ENCODE measurements at regions of chr1 and their contacts with region 1.

Region 1: DNA sequence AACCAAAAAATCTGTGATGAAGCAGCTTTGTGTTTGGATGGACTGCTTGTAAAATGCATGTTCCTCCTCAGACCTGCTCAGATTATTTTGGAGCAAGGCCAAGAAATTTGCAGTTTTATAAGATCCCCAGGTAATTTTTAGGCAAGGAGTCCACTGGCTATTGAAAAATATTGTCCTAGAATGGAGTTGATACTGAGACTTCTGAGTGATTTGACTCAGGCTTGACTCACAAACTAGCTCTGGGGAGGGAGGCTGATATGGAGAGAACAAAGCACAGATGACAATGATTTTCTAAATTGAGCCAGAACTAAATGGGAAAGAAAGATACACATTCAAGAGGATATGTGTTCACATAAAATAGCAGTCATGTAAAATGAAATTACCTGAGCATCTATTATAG is 36.7 kb downstream of the AGL start:
- DNase-seq: no peak
- ATAC-seq: no peak
- H3K4me3 ChIP-seq: no peak overlapping the region
- H3K4me3 Mint-ChIP-seq: no peak overlapping the region
- H3K27ac ChIP-seq: no peak overlapping the region
- H3K27ac Mint-ChIP-seq: no peak overlapping the region
- H3K4me1 ChIP-seq: no peaks in the 10 kb centered on the region
- H3K4me1 Mint-ChIP-seq: no peaks in the 10 kb centered on the region
- H3K27me3 ChIP-seq: no peaks in the 10 kb centered on the region
- H3K27me3 Mint-ChIP-seq: no peaks in the 10 kb centered on the region
- CTCF ChIP-seq: no peak

Region 2: DNA sequence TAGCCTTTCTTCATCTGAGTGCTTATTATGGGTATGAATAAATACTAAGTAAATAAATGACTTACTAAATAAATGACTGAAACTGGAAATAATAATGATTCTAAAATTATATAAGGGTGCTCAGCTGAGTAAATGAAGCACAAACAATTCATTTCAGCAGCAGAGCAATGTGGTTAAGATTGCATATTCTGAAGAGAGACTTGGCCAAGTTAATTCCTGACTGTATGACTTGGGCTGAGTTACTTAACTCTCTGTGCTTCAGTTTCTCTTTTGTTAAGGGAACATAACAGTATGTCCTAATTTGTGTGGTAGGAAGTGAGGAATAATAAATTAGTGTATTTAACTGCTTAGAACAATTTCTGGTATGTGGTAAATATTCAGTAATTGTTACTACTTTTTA is 17.5 kb before region 1 on chr1:
- CTCF ChIA-PET with region 1: no interaction called
- POLR2A ChIA-PET with region 1: interaction called, 3 read pairs
- intact Hi-C with region 1: loop called in 1 of 2 experiments (anchors 2 kb)
- DNase-seq: no peak
- ATAC-seq: no peak
- H3K4me3 ChIP-seq: no peak overlapping the region
- H3K4me3 Mint-ChIP-seq: no peak overlapping the region
- H3K27ac ChIP-seq: no peak overlapping the region
- H3K27ac Mint-ChIP-seq: no peak overlapping the region
- H3K4me1 ChIP-seq: no peaks in the 10 kb centered on the region
- H3K4me1 Mint-ChIP-seq: no peaks in the 10 kb centered on the region
- H3K27me3 ChIP-seq: no peaks in the 10 kb centered on the region
- H3K27me3 Mint-ChIP-seq: no peaks in the 10 kb centered on the region
- CTCF ChIP-seq: no peak

Measured in CD4-positive, alpha-beta T cell (primary cell).